ENCODE measurements at regions of chr2 and their contacts with region 1.

Region 1: GRCh38 chr2:67650291-67651133 is 253.4 kb downstream of the ETAA1 start:
- DNase-seq: peak; percentile 96
- ATAC-seq: peak; percentile 93
- H3K4me3 ChIP-seq: no peak overlapping the region
- H3K27ac ChIP-seq: peak overlapping the region; percentile 61; the same call in 1 of the 2 replicates
- H3K4me1 ChIP-seq: peaks cover 11% of the 10 kb centered on the region
- H3K27me3 ChIP-seq: no peaks in the 10 kb centered on the region
- CTCF ChIP-seq: peak; percentile 93
- POLR2A ChIP-seq: peak; percentile 63; the same call in 1 of the 2 replicates
- RAD21 ChIP-seq: peak; percentile 96

Region 2: GRCh38 chr2:66445925-66446860 is 1204.3 kb before region 1 on chr2:
- CTCF ChIA-PET with region 1: interaction called, 3 read pairs
- POLR2A ChIA-PET with region 1: no interaction called
- dilution Hi-C with region 1: no loop called
- in situ Hi-C with region 1: no loop called
- intact Hi-C with region 1: loop called (anchors 5 kb)
- DNase-seq: no peak
- ATAC-seq: peak; percentile 33
- H3K4me3 ChIP-seq: peak overlapping the region; percentile 39
- H3K27ac ChIP-seq: peak overlapping the region; percentile 97
- H3K4me1 ChIP-seq: peaks cover 4% of the 10 kb centered on the region
- H3K27me3 ChIP-seq: no peaks in the 10 kb centered on the region
- CTCF ChIP-seq: peak; percentile 19; the same call in 1 of the 2 replicates
- POLR2A ChIP-seq: peak; percentile 54; the same call in 1 of the 2 replicates
- RAD21 ChIP-seq: no peak

Region 3: GRCh38 chr2:66839551-66840320 is 810.8 kb before region 1 on chr2:
- CTCF ChIA-PET with region 1: interaction called, 3 read pairs
- POLR2A ChIA-PET with region 1: no interaction called
- dilution Hi-C with region 1: no loop called
- in situ Hi-C with region 1: no loop called
- intact Hi-C with region 1: loop called (anchors 2 kb)
- DNase-seq: peak; percentile 100
- ATAC-seq: peak; percentile 93
- H3K4me3 ChIP-seq: 0 out of 2 replicates have a peak overlapping the region, but pooled peaks have one; percentile 37
- H3K27ac ChIP-seq: peak overlapping the region; percentile 89
- H3K4me1 ChIP-seq: peaks cover 11% of the 10 kb centered on the region
- H3K27me3 ChIP-seq: no peaks in the 10 kb centered on the region
- CTCF ChIP-seq: 0 out of 2 replicates have a peak, but pooled peaks have one; percentile 1
- POLR2A ChIP-seq: peak; percentile 73
- RAD21 ChIP-seq: no peak; the same call in 1 of the 2 replicates

Region 4: GRCh38 chr2:67234439-67234838 is 416.1 kb before region 1 on chr2:
- CTCF ChIA-PET with region 1: no interaction called
- POLR2A ChIA-PET with region 1: no interaction called
- dilution Hi-C with region 1: no loop called
- in situ Hi-C with region 1: loop called (anchors 25 kb)
- intact Hi-C with region 1: loop called (anchors 2 kb)
- DNase-seq: peak; percentile 72
- ATAC-seq: peak; percentile 94
- H3K4me3 ChIP-seq: no peak overlapping the region
- H3K27ac ChIP-seq: no peak overlapping the region
- H3K4me1 ChIP-seq: peaks cover 2% of the 10 kb centered on the region; the same call in 1 of the 2 replicates
- H3K27me3 ChIP-seq: no peaks in the 10 kb centered on the region
- CTCF ChIP-seq: peak; percentile 75
- POLR2A ChIP-seq: no peak
- RAD21 ChIP-seq: peak; percentile 86

Region 5: GRCh38 chr2:67397143-67397986 is 253.1 kb before region 1 on chr2 and contains the start of gene ETAA1:
- CTCF ChIA-PET with region 1: interaction called, 5 read pairs
- POLR2A ChIA-PET with region 1: interaction called, 4 read pairs
- dilution Hi-C with region 1: no loop called
- in situ Hi-C with region 1: no loop called
- intact Hi-C with region 1: loop called (anchors 2 kb)
- DNase-seq: peak; percentile 90
- ATAC-seq: peak; percentile 96
- H3K4me3 ChIP-seq: peak within 1 kb of the TSS; percentile 87
- H3K27ac ChIP-seq: peak within 1 kb of the TSS; percentile 96
- H3K4me1 ChIP-seq: peaks cover 9% of the 10 kb centered on the region
- H3K27me3 ChIP-seq: no peaks in the 10 kb centered on the region
- CTCF ChIP-seq: no peak
- POLR2A ChIP-seq: peak; percentile 83
- RAD21 ChIP-seq: peak; percentile 25
- total RNA-seq, gene ETAA1: 8.1 and 19.2 TPM in 2 replicates

Region 6: DNA sequence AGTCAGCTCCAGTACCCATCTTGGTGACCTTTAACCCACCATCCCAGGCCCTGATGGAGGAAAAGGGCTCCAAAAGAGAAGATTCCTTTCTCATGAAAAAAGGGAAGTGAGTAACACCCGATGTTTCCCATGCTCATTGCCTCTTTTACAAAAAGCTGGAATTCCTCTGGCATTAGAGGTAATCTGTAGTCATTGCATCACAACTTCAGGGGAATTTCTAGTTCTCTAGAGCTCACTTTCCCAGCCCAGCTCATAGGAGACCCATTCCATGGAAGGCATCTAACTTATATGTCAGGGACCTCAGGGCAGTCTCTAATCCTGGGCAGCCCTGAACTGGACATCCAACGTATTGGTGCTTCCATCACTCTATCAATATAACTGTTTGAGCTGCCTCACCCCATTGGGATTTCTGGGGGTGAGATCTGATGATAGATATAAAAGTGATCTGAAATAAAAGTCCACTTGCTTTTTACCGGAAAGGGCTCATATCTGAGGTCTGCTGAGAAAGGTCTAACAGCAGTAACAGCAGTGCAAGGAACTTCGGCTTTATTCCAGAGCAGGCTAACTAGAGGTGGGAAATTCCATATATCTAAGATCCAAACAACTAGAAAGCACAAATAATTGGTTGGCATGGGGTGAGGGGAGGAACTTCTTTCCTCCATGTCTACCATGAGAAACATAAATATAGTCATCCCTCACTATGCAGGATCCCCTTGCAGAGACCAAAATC is 147.3 kb before region 1 on chr2:
- CTCF ChIA-PET with region 1: no interaction called
- POLR2A ChIA-PET with region 1: no interaction called
- dilution Hi-C with region 1: no loop called
- in situ Hi-C with region 1: no loop called
- intact Hi-C with region 1: loop called (anchors 5 kb)
- DNase-seq: peak; percentile 99
- ATAC-seq: peak; percentile 78
- H3K4me3 ChIP-seq: no peak overlapping the region
- H3K27ac ChIP-seq: peak overlapping the region; percentile 67
- H3K4me1 ChIP-seq: peaks cover 16% of the 10 kb centered on the region
- H3K27me3 ChIP-seq: no peaks in the 10 kb centered on the region
- CTCF ChIP-seq: no peak
- POLR2A ChIP-seq: 0 out of 2 replicates have a peak, but pooled peaks have one; percentile 47
- RAD21 ChIP-seq: peak; percentile 8; the same call in 1 of the 2 replicates

Region 7: GRCh38 chr2:67867735-67868134 is 217.2 kb after region 1 on chr2:
- CTCF ChIA-PET with region 1: no interaction called
- POLR2A ChIA-PET with region 1: no interaction called
- dilution Hi-C with region 1: no loop called
- in situ Hi-C with region 1: no loop called
- intact Hi-C with region 1: no loop called
- DNase-seq: peak; percentile 69
- ATAC-seq: peak; percentile 53
- H3K4me3 ChIP-seq: no peak overlapping the region
- H3K27ac ChIP-seq: no peak overlapping the region
- H3K4me1 ChIP-seq: peaks cover 10% of the 10 kb centered on the region
- H3K27me3 ChIP-seq: peaks cover 6% of the 10 kb centered on the region
- CTCF ChIP-seq: no peak
- POLR2A ChIP-seq: no peak
- RAD21 ChIP-seq: no peak

Region 8: GRCh38 chr2:68031542-68032160 is 381.1 kb after region 1 on chr2:
- CTCF ChIA-PET with region 1: interaction called, 12 read pairs
- POLR2A ChIA-PET with region 1: no interaction called
- dilution Hi-C with region 1: no loop called
- in situ Hi-C with region 1: no loop called
- intact Hi-C with region 1: loop called (anchors 2 kb)
- DNase-seq: peak; percentile 70
- ATAC-seq: peak; percentile 89
- H3K4me3 ChIP-seq: no peak overlapping the region
- H3K27ac ChIP-seq: no peak overlapping the region
- H3K4me1 ChIP-seq: no peaks in the 10 kb centered on the region; the same call in 1 of the 2 replicates
- H3K27me3 ChIP-seq: no peaks in the 10 kb centered on the region
- CTCF ChIP-seq: peak; percentile 79
- POLR2A ChIP-seq: no peak
- RAD21 ChIP-seq: peak; percentile 89

Measured in IMR-90 (cell line).